Activated T-helper 1 cell treated with anti-CD3 and anti-CD28 coated beads, Interleukin-12 subunit alpha, Interleukin-12 subunit beta, Interleukin-2, Interleukin-4 antibody, amounts not matched to agents 30 ng/mL and 10 ng/mL and 1 ng/mL, durations not matched to agents 14 hours and 24 hours and 36 hours (primary cell): ENCODE measurements at regions of chr6 and their contacts with region 1.

Region 1: GRCh38 chr6:125114248-125114858 is 39.2 kb upstream of the TPD52L1 start:
- DNase-seq: no peak
- H3K4me3 Mint-ChIP-seq: no peak overlapping the region
- H3K27ac Mint-ChIP-seq: no peak overlapping the region
- H3K4me1 Mint-ChIP-seq: no peaks in the 10 kb centered on the region
- H3K27me3 Mint-ChIP-seq: peaks cover 10% of the 10 kb centered on the region

Region 2: DNA sequence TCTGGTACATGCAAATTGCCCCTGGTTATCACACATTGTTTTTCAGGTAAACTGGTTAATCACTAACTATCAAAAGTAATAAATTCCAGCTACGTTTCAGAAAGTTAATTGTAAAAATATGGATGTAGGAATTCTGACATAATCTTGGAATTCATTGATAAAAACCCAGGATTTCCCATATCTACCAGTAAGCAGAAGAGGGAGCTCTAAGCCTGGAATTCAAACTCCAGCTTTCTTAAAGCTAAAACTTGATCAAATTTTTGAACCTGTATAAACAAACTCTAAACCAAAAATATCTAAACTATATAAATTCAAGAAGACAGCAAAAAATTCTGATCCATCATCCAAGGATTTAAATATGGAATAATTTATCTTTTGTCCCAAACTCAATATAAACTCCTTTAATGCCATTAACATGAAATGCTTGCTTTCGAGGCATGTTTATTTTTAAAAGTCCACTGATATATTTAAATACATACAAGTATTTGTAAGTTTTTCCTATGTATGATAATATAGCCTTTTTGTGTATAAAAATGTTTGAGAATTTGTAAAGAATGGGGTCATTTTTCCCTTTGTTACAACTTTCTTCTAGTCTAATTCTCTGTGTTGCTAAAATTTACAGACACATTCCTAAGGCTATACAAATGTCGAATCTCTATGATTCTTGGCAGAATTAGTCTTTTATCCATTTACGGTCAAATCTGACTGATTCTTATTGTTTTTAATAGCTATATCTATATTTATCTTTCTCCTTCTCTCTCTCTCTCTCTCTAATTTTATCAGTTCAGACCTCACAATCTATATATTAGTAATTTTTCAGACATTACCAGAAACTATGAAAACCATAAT is 243.5 kb before region 1 on chr6:
- intact Hi-C with region 1: loop called (anchors 1 kb)
- DNase-seq: no peak
- H3K4me3 Mint-ChIP-seq: no peak overlapping the region
- H3K27ac Mint-ChIP-seq: no peak overlapping the region
- H3K4me1 Mint-ChIP-seq: no peaks in the 10 kb centered on the region
- H3K27me3 Mint-ChIP-seq: peaks cover 4% of the 10 kb centered on the region

Region 3: GRCh38 chr6:124999105-124999764 is 115.1 kb before region 1 on chr6:
- intact Hi-C with region 1: no loop called
- DNase-seq: no peak
- H3K4me3 Mint-ChIP-seq: no peak overlapping the region
- H3K27ac Mint-ChIP-seq: no peak overlapping the region
- H3K4me1 Mint-ChIP-seq: no peaks in the 10 kb centered on the region
- H3K27me3 Mint-ChIP-seq: no peaks in the 10 kb centered on the region

Region 4: DNA sequence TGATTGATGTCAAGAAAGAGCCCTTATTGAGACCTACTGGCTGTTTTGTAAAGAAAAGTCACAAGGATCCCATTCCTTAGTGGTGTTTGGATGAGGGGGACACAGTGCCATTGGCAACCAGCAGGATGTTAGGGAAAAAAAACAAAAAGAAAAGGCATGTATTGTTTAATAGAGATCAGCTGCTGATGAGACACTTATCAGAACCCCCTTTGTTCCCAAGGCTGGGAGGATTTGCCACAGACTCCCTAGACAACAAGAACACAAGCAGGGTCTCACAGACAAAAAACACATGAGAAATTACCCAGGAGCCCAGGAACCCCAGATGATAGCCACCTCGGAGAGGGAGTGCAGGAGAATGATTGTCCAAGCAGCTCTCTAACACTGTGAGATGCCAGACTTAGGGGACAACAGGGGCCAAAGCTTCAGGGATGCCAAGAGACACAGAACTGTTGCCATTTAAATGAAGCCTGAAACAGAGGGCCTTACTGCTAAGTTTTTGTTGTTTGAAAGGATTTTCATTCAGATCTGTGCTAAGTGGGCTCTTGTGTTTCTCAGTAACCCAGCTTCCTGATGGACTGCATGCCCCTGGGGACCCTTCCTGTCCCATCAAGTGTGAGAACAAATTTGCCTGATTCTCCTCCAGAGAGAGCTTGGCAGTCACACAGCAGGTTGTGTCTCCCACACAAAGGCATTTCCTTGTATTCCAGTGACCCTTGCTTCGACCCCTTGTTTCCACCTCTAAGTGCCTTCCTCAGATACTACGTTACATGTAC is 586.4 kb after region 1 on chr6:
- intact Hi-C with region 1: no loop called
- DNase-seq: no peak
- H3K4me3 Mint-ChIP-seq: no peak overlapping the region
- H3K27ac Mint-ChIP-seq: no peak overlapping the region
- H3K4me1 Mint-ChIP-seq: no peaks in the 10 kb centered on the region
- H3K27me3 Mint-ChIP-seq: peaks cover 14% of the 10 kb centered on the region